Esophagus muscularis mucosa (tissue), 4 donors: ENCODE measurements at regions of chr3 and their contacts with region 1.

Region 1: DNA sequence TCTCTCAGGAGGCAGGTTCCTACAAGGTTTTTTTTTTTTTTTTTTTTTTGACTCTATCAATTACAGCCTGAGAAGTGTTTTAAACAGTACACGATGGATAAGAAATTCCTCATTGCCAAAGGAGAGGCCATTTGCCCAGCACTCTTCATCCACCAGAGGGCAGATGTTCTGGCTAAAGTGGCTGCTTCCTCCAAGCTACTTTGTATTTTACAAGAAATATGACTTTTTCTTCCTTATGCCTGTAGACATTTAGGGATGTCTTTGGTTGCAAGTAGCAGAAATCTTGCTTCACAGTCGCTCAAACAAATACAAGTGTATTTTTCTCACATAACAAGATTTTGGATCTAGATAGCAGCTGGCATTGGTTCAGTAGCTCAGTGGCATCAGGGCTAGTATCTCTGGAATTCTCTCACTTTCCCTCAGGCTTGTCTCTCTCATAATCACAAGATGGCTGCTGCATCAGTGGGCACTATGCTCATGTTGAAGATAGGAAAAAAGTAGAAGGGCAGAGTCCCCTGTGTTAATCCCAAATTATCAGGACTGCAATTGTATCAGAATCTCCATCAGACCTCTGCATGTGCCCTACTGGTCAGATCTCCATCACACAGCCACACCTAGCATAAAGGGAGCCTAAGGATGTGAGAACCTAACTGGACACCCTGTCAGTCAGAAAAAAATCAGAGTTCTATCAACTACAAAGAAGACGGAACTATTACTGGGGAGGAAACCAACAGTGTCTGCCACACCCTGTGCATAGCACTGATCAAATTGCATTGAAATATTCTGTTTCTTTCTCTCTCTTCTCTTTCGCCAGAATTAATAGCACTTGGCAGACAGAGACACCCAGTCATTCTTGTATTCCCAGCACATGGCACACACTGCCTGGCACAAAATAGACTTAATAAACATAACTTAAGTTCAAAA is 138.9 kb upstream of the COL8A1 start:
- DNase-seq: no peak
- H3K4me3 ChIP-seq: no peak overlapping the region
- H3K27ac ChIP-seq: no peak overlapping the region
- H3K4me1 ChIP-seq: peaks cover 13 to 46% (median 29%) of the 10 kb centered on the region in 4 donors
- H3K27me3 ChIP-seq: no peaks in the 10 kb centered on the region
- CTCF ChIP-seq: peak; percentile 63 to 80 (median 70)
- EP300 ChIP-seq: no peak
- POLR2A ChIP-seq: no peak

Region 2: DNA sequence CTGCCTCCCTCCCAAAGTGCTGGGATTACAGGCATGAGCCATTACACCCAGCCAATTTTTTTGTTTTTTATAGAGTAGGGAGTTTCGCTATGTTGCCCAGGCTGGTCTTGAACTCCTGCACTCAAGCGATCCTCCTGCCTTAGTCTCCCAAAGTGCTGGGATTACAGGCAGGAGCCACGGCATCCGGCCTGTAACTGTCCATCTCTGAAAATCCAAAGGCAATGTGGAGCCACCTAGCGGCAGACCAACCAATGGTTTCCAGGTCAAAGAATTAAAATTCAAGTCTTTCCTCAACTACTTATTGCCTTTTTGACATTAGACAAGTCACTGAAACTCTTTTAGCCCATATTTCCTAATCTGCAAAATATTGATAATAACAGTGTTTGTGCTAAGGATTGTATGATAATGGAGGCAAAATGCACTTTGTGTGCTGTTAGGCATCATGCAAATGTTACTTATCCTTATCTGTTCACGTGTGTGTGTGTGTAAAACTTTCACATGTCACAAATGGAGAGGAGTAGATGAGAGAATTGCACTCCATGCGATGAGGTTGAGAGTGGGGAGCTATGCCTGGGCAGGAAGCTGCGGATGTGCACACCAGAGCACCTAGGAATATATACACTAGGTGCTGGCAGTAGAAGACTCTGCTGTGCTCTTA is 187.6 kb after region 1 on chr3:
- intact Hi-C with region 1: loop called (anchors 5 kb)
- DNase-seq: no peak
- H3K4me3 ChIP-seq: no peak overlapping the region
- H3K27ac ChIP-seq: no peak overlapping the region
- H3K4me1 ChIP-seq: peaks cover 4 to 39% (median 29%) of the 10 kb centered on the region in 4 donors
- H3K27me3 ChIP-seq: no peaks in the 10 kb centered on the region
- CTCF ChIP-seq: peak; percentile 71 to 75 (median 74)
- EP300 ChIP-seq: no peak
- POLR2A ChIP-seq: no peak

Region 3: DNA sequence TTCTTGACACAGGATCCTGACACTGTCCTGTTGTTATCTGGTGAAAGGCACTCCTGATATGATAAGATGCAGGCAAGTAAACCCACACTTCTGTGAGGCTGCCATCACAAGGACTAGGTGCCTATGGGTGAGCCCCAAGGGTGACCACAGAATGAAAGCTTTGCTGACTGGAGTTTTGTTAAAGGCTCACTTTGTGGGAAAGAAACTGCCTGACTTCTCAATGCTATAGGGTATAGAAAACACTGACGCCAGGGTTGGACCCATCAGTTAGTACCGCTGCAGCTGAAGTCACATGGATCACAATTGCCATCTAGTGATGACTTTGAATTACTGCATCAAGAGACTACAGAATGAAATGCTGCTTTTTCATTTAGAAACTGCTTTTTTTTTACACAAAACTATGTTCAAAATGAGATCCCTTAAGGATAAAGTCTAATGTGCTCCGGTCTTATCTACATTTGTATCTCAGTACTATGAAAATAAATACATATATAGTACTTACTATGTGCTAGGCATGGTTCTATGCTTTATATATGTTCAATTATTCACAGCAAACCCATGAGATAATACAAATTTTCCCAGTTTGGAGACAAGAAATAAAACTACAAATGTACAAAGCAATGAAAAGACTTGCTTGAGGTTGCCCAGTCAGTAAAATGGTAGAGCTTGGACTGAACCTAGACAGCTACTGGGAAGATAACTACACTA is 253.9 kb after region 1 on chr3:
- intact Hi-C with region 1: loop called (anchors 2 kb)
- DNase-seq: no peak
- H3K4me3 ChIP-seq: no peak overlapping the region
- H3K27ac ChIP-seq: no peak overlapping the region
- H3K4me1 ChIP-seq: peaks cover 2 to 21% (median 12%) of the 10 kb centered on the region in 4 donors
- H3K27me3 ChIP-seq: no peaks in the 10 kb centered on the region
- CTCF ChIP-seq: peak; percentile 60 to 81 (median 71)
- EP300 ChIP-seq: no peak
- POLR2A ChIP-seq: no peak